ENCODE measurements at regions of chr4 and their contacts with region 1.

Region 1: DNA sequence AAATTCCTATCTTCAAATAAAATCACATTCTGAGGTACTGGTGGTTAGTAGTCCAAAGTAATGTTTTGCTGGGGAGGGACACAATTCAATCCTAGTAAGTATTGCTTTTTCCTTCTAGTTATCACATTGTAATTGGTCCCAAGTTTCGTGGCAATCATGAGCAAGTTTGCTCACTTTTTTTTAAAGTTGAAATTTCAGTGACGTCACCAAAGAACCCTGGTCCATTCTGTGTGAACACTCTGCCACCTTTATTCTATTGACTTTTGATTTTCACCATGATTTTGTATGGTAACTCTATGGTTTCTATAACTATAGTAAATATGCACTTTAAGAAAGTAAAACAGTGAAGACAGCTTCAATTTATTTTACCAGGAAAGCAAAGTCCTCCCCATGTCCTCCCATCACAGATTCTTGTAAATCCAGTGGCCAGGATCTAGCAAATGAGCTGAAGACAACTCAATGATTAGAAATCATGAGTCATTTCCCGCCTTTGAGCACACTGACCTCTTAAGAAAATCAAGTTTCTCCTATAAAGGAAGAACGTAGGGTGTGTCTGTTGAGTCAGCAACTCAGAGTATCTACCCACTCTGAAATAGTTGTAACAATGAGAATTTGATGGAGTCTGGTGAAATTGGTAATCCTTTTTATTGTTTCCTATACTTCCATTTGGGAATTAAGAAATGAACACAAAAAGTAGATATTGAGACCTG is 1306.6 kb upstream of the PABPC4L start:
- DNase-seq: peak; percentile 67
- H3K4me3 ChIP-seq: no peak overlapping the region
- H3K27ac ChIP-seq: no peak overlapping the region
- H3K4me1 ChIP-seq: peaks cover 11% of the 10 kb centered on the region
- H3K27me3 ChIP-seq: no peaks in the 10 kb centered on the region
- CTCF ChIP-seq: no peak
- POLR2A ChIP-seq: no peak

Region 2: DNA sequence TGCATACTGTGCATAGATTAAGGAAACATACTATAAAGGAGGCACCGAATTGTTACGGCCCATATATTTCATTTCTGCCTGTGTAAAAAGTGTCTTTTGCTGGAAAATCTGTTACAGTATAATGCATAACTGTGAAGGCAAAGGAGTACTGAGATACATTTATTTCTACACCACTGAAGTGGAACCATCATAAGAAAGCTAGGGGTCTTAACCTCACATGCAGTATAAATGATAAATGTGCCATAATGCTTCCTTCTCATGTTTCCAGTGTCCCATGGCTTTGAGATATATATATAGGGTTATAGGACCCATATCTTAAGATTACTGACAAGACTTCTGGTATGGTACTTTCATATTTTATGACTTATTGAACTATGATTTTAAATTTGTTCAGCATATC is 592.8 kb before region 1 on chr4:
- CTCF ChIA-PET with region 1: no interaction called
- POLR2A ChIA-PET with region 1: no interaction called
- dilution Hi-C with region 1: no loop called
- intact Hi-C with region 1: no loop called
- DNase-seq: no peak
- H3K4me3 ChIP-seq: no peak overlapping the region
- H3K27ac ChIP-seq: no peak overlapping the region
- H3K4me1 ChIP-seq: no peaks in the 10 kb centered on the region
- H3K27me3 ChIP-seq: no peaks in the 10 kb centered on the region
- CTCF ChIP-seq: no peak
- POLR2A ChIP-seq: no peak

Region 3: GRCh38 chr4:135485371-135485770 is 22.8 kb before region 1 on chr4:
- CTCF ChIA-PET with region 1: no interaction called
- POLR2A ChIA-PET with region 1: no interaction called
- dilution Hi-C with region 1: no loop called
- intact Hi-C with region 1: loop called (anchors 2 kb)
- DNase-seq: no peak
- H3K4me3 ChIP-seq: no peak overlapping the region
- H3K27ac ChIP-seq: no peak overlapping the region
- H3K4me1 ChIP-seq: no peaks in the 10 kb centered on the region
- H3K27me3 ChIP-seq: no peaks in the 10 kb centered on the region
- CTCF ChIP-seq: no peak
- POLR2A ChIP-seq: no peak